CD4-positive, alpha-beta T cell (primary cell): ENCODE measurements at regions of chr16 and their contacts with region 1.

Region 1: DNA sequence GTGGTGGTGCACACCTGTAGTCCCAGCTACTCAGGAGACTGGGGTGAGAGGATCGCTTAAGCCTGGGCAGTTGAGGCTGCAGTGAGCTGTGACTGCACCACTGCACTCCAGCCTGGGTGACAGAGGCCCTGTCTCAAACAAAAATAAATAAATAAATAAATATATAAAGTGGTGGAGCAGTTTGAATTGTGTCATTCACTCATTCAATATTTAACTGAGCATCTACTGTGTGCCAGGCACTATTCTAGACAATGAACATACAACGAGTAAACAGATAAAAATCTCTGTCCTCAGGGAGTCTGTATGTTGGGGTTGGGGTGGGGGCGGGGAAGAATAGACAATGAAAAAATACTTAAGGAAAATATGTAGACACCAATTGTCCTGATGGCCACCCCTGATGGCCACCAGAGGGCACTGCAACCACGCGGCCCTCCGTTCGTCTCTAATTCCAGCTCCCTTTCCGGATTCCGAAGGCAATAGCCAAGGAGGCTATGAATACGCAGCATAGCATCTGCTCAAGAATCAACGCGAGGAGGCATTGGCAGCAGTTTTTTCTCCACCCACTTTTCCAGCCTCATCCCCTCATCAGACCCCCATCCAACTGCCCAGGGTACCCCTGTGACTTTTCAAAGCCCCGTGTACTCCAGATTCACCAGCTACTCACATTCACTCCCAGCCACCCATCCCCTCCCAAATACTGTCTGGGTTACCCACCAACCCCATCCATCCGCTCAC is 21.4 kb downstream of the QPRT start:
- DNase-seq: peak; percentile 66 to 91 (median 74)
- ATAC-seq: peak; percentile 19
- H3K4me3 ChIP-seq: no peak overlapping the region
- H3K4me3 Mint-ChIP-seq: peak overlapping the region; percentile 76
- H3K27ac ChIP-seq: peak overlapping the region in 1 of 2 donors; percentile 81
- H3K27ac Mint-ChIP-seq: peak overlapping the region; percentile 94
- H3K4me1 ChIP-seq: peaks cover 41% of the 10 kb centered on the region
- H3K4me1 Mint-ChIP-seq: peaks cover 40% of the 10 kb centered on the region
- H3K27me3 ChIP-seq: no peaks in the 10 kb centered on the region
- H3K27me3 Mint-ChIP-seq: no peaks in the 10 kb centered on the region
- CTCF ChIP-seq: peak; percentile 93

Region 2: GRCh38 chr16:29720699-29721098 is 20.3 kb after region 1 on chr16:
- CTCF ChIA-PET with region 1: interaction called, 10 read pairs
- POLR2A ChIA-PET with region 1: interaction called, 13 read pairs
- intact Hi-C with region 1: loop called (anchors 1 kb)
- DNase-seq: no peak
- ATAC-seq: no peak
- H3K4me3 ChIP-seq: no peak overlapping the region
- H3K4me3 Mint-ChIP-seq: no peak overlapping the region
- H3K27ac ChIP-seq: no peak overlapping the region
- H3K27ac Mint-ChIP-seq: no peak overlapping the region
- H3K4me1 ChIP-seq: peaks cover 3% of the 10 kb centered on the region
- H3K4me1 Mint-ChIP-seq: peaks cover 21% of the 10 kb centered on the region
- H3K27me3 ChIP-seq: no peaks in the 10 kb centered on the region
- H3K27me3 Mint-ChIP-seq: no peaks in the 10 kb centered on the region
- CTCF ChIP-seq: no peak

Region 3: GRCh38 chr16:29745853-29746345 is 45.5 kb after region 1 on chr16 and contains the start of gene C16orf54:
- CTCF ChIA-PET with region 1: interaction called, 8 read pairs
- POLR2A ChIA-PET with region 1: interaction called, 43 read pairs
- intact Hi-C with region 1: loop called in 1 of 2 experiments (anchors 2 kb)
- DNase-seq: peak; percentile 88 to 99 (median 92)
- ATAC-seq: peak; percentile 82
- H3K4me3 ChIP-seq: peak within 1 kb of the TSS; percentile 74
- H3K4me3 Mint-ChIP-seq: peak within 1 kb of the TSS; percentile 99
- H3K27ac ChIP-seq: peak within 1 kb of the TSS; percentile 93 to 96
- H3K27ac Mint-ChIP-seq: peak within 1 kb of the TSS; percentile 98
- H3K4me1 ChIP-seq: peaks cover 87% of the 10 kb centered on the region
- H3K4me1 Mint-ChIP-seq: peaks cover 70% of the 10 kb centered on the region
- H3K27me3 ChIP-seq: no peaks in the 10 kb centered on the region
- H3K27me3 Mint-ChIP-seq: no peaks in the 10 kb centered on the region
- CTCF ChIP-seq: no peak
- total RNA-seq, gene C16orf54: 250 to 261 TPM

Region 4: DNA sequence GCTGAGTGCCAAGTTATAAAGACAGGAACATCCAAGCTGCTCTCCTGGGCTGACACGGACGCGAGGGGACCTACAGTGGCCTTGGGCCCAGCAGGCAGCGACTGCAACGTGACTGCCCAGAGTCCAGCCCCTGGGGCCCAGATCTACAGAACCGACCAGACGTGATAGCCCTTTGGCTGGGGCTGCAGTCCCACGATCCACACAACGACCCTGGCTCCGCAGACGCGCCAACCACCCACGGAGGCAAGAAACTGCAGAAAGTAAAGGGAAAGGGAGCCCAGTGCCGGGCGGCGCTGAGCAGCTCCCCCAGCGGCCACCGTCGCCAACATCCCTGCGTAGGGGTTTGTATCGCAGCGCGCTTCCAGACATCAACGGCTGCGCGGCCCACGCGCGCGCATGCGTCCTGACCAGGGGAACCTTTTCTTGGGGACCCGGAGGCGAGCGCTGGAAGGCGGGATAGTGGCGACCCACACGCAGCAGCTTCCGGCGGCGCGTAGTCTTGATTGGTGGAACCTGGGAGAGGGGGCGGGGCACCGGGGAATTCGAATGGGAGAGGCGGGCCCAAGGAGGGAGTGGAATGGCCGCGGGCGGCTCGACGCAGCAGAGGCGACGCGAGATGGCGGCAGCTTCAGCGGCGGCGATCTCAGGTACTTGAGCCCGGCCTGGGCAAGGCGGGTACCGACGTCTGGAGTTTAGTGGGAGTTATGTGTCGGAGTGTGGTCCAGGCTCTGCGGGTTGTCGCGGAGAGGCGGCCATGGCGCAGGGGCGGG is 89.9 kb after region 1 on chr16 and contains the start of gene KIF22:
- CTCF ChIA-PET with region 1: interaction called, 60 read pairs
- POLR2A ChIA-PET with region 1: interaction called, 102 read pairs
- intact Hi-C with region 1: loop called (anchors 1 kb)
- DNase-seq: peak; percentile 99 to 100 (median 100)
- ATAC-seq: peak; percentile 90
- H3K4me3 ChIP-seq: peak within 1 kb of the TSS; percentile 93
- H3K4me3 Mint-ChIP-seq: peak within 1 kb of the TSS; percentile 96
- H3K27ac ChIP-seq: peak within 1 kb of the TSS; percentile 82 to 83
- H3K27ac Mint-ChIP-seq: peak within 1 kb of the TSS; percentile 97
- H3K4me1 ChIP-seq: peaks cover 43% of the 10 kb centered on the region
- H3K4me1 Mint-ChIP-seq: peaks cover 51% of the 10 kb centered on the region
- H3K27me3 ChIP-seq: no peaks in the 10 kb centered on the region
- H3K27me3 Mint-ChIP-seq: no peaks in the 10 kb centered on the region
- CTCF ChIP-seq: peak; percentile 80
- total RNA-seq, gene KIF22: 99.0 to 101 TPM

Region 5: GRCh38 chr16:29848420-29849297 is 148.2 kb after region 1 on chr16:
- CTCF ChIA-PET with region 1: interaction called, 49 read pairs
- POLR2A ChIA-PET with region 1: interaction called, 47 read pairs
- intact Hi-C with region 1: loop called (anchors 1 to 2 kb)
- DNase-seq: peak; percentile 74 to 93 (median 82)
- ATAC-seq: peak; percentile 97
- H3K4me3 ChIP-seq: no peak overlapping the region
- H3K4me3 Mint-ChIP-seq: no peak overlapping the region
- H3K27ac ChIP-seq: no peak overlapping the region
- H3K27ac Mint-ChIP-seq: no peak overlapping the region
- H3K4me1 ChIP-seq: peaks cover 7% of the 10 kb centered on the region
- H3K4me1 Mint-ChIP-seq: peaks cover 7% of the 10 kb centered on the region
- H3K27me3 ChIP-seq: no peaks in the 10 kb centered on the region
- H3K27me3 Mint-ChIP-seq: no peaks in the 10 kb centered on the region
- CTCF ChIP-seq: peak; percentile 92